K562 (cell line): ENCODE measurements at regions of chr6 and their contacts with region 1.

Region 1: GRCh38 chr6:43758617-43759050 is 11.4 kb upstream of the VEGFA start:
- DNase-seq: peak; percentile 57 to 79 (median 77)
- ATAC-seq: peak; percentile 91
- H3K4me3 ChIP-seq: no peak overlapping the region
- H3K27ac ChIP-seq: no peak overlapping the region
- H3K4me1 ChIP-seq: peaks cover 6 to 10% of the 10 kb centered on the region in 2 experiments; a peak in 3 of 5 replicates
- H3K27me3 ChIP-seq: peaks cover 10 to 31% of the 10 kb centered on the region in 2 experiments; a peak in 4 of 5 replicates
- CTCF ChIP-seq: peak; percentile 80 to 94 (median 85)
- EP300 ChIP-seq: no peak
- POLR2A ChIP-seq: no peak
- RAD21 ChIP-seq: peak; percentile 73 to 81

Region 2: DNA sequence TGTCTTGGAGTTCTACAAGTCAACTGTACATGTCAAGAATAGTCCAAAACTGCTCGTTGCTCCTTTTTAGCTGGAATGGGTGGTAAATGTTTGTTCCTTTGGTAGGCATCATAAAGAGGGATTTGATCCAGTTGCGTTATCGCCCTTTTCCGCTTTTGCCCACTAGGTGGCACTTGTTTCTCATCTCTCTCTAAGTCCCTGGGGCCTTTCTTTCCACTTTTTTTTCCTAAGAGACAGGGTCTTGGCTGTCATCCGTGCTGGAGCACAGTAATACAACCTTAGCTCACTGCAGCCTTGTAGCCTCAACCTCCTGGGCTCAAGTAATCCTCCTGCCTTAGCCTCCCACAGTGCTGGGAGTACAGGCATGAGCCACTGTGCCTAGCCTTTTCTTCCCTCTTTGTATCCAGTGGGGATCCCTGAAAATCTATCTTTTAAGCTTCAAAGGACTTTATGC is 150.3 kb before region 1 on chr6:
- CTCF ChIA-PET with region 1: interaction called, 8 read pairs
- POLR2A ChIA-PET with region 1: interaction called, 3 read pairs
- in situ Hi-C with region 1: no loop called
- intact Hi-C with region 1: loop called (anchors 2 kb)
- DNase-seq: peak; percentile 72 to 88 (median 74)
- ATAC-seq: peak; percentile 93
- H3K4me3 ChIP-seq: no peak overlapping the region
- H3K27ac ChIP-seq: no peak overlapping the region; the same call in 2 of the 3 replicates
- H3K4me1 ChIP-seq: peaks cover 3 to 14% of the 10 kb centered on the region in 2 experiments; a peak in 4 of 5 replicates
- H3K27me3 ChIP-seq: no peaks in the 10 kb centered on the region
- CTCF ChIP-seq: peak; percentile 73 to 90 (median 87)
- EP300 ChIP-seq: no peak
- POLR2A ChIP-seq: no peak
- RAD21 ChIP-seq: peak; percentile 75 to 81

Region 3: GRCh38 chr6:43723737-43724295 is 34.8 kb before region 1 on chr6:
- CTCF ChIA-PET with region 1: interaction called, 5 read pairs
- POLR2A ChIA-PET with region 1: interaction called, 3 read pairs
- in situ Hi-C with region 1: no loop called
- intact Hi-C with region 1: loop called (anchors 1 kb)
- DNase-seq: peak; percentile 91 to 94 (median 93)
- ATAC-seq: peak; percentile 87
- H3K4me3 ChIP-seq: no peak overlapping the region
- H3K27ac ChIP-seq: peak overlapping the region; percentile 68; the same call in 1 of the 3 replicates
- H3K4me1 ChIP-seq: peaks cover 25 to 31% of the 10 kb centered on the region in 2 experiments
- H3K27me3 ChIP-seq: no peaks in the 10 kb centered on the region; a peak in 1 of 5 replicates
- CTCF ChIP-seq: peak; percentile 91 to 98 (median 97)
- EP300 ChIP-seq: 0 out of 2 replicates have a peak, but pooled peaks have one; percentile 2
- POLR2A ChIP-seq: no peak
- RAD21 ChIP-seq: peak; percentile 93 to 97

Region 4: DNA sequence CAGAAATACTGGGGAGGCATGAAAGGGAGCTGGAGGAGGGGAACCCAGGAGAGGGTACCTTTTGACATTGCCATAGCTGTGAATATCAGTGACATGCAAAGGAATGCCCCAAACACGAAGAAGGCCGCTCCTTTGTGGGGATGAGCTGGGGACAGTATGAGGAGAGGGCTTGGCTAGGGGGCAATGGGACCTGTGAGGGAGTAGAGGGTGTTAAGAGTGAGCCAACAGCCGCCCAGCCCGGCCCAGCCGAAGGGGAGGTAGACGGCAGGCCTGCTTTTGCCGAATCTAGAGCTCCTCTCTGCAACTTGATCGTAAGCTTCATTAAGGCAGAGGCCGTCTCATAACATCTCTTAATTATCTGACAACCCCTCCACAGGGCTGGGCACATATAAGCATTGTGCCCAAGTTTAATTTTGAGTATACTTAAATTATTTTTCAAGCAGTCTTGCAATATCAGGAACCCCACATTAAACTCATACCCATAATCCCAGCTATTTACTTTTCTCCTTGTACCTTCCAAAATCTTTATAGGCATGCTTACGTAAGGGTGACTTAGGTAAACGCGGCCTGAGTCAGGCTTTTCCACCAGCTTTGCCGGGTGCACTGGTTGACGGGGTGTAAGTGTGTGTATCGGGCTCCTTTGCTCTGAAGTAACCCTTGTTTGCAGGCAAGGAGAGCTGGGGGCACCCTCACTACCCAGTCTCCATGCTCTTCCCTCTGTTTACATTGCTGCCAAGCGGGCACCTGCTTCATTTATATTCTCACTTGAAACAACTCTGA is 13.5 kb before region 1 on chr6:
- CTCF ChIA-PET with region 1: no interaction called
- POLR2A ChIA-PET with region 1: interaction called, 17 read pairs
- in situ Hi-C with region 1: no loop called
- intact Hi-C with region 1: no loop called
- DNase-seq: no peak
- ATAC-seq: no peak
- H3K4me3 ChIP-seq: no peak overlapping the region
- H3K27ac ChIP-seq: no peak overlapping the region
- H3K4me1 ChIP-seq: peaks cover 7 to 16% of the 10 kb centered on the region in 2 experiments; a peak in 4 of 5 replicates
- H3K27me3 ChIP-seq: no peaks in the 10 kb centered on the region; a peak in 1 of 5 replicates
- CTCF ChIP-seq: no peak
- EP300 ChIP-seq: no peak
- POLR2A ChIP-seq: no peak
- RAD21 ChIP-seq: no peak

Region 5: GRCh38 chr6:44100088-44100550 is 341.5 kb after region 1 on chr6:
- CTCF ChIA-PET with region 1: no interaction called
- POLR2A ChIA-PET with region 1: no interaction called
- in situ Hi-C with region 1: no loop called
- intact Hi-C with region 1: no loop called
- DNase-seq: peak; percentile 48 to 62 (median 52)
- ATAC-seq: peak; percentile 87
- H3K4me3 ChIP-seq: no peak overlapping the region
- H3K27ac ChIP-seq: no peak overlapping the region
- H3K4me1 ChIP-seq: peaks cover 0 to 7% of the 10 kb centered on the region in 2 experiments; a peak in 3 of 5 replicates
- H3K27me3 ChIP-seq: no peaks in the 10 kb centered on the region
- CTCF ChIP-seq: peak; percentile 69 to 76 (median 74)
- EP300 ChIP-seq: no peak
- POLR2A ChIP-seq: no peak
- RAD21 ChIP-seq: peak; percentile 7 to 62; a peak in 2 of 4 replicates

Region 6: GRCh38 chr6:44172731-44173500 is 414.3 kb after region 1 on chr6:
- CTCF ChIA-PET with region 1: no interaction called
- POLR2A ChIA-PET with region 1: no interaction called
- in situ Hi-C with region 1: no loop called
- intact Hi-C with region 1: no loop called
- DNase-seq: peak; percentile 90 to 94 (median 92)
- ATAC-seq: peak; percentile 98
- H3K4me3 ChIP-seq: no peak overlapping the region
- H3K27ac ChIP-seq: no peak overlapping the region
- H3K4me1 ChIP-seq: peaks cover 2 to 25% of the 10 kb centered on the region in 2 experiments; a peak in 3 of 5 replicates
- H3K27me3 ChIP-seq: peaks cover 2 to 21% of the 10 kb centered on the region in 2 experiments; a peak in 2 of 5 replicates
- CTCF ChIP-seq: peak; percentile 96 to 99 (median 98)
- EP300 ChIP-seq: no peak; the same call in 1 of the 2 replicates
- POLR2A ChIP-seq: no peak
- RAD21 ChIP-seq: peak; percentile 97 to 99